Naive thymus-derived CD4-positive, alpha-beta T cell (primary cell): ENCODE measurements at regions of chr4 and their contacts with region 1.

Region 1: GRCh38 chr4:89110986-89111832 is at the start of gene TIGD2:
- DNase-seq: peak; percentile 81 to 90 (median 87)
- ATAC-seq: peak; percentile 97
- H3K4me3 ChIP-seq: peak within 1 kb of the TSS; percentile 80
- H3K4me3 Mint-ChIP-seq: peak within 1 kb of the TSS; percentile 84 to 93 (median 90)
- H3K27ac ChIP-seq: peak within 1 kb of the TSS; percentile 81
- H3K27ac Mint-ChIP-seq: peak within 1 kb of the TSS; percentile 80 to 94 (median 89)
- H3K4me1 ChIP-seq: peaks cover 10 to 15% of the 10 kb centered on the region in 2 donors
- H3K4me1 Mint-ChIP-seq: peaks cover 20 to 28% (median 24%) of the 10 kb centered on the region in 7 donors
- H3K27me3 ChIP-seq: no peaks in the 10 kb centered on the region
- H3K27me3 Mint-ChIP-seq: peaks cover 0 to 25% (median 0%) of the 10 kb centered on the region in 5 donors
- total RNA-seq, gene TIGD2: 3.0 to 7.9 (median 5.2) TPM

Region 2: GRCh38 chr4:87422104-87423052 is 1688.8 kb before region 1 on chr4 and contains the start of gene NUDT9:
- CTCF ChIA-PET with region 1: no interaction called
- POLR2A ChIA-PET with region 1: no interaction called
- intact Hi-C with region 1: loop called in 1 of 2 experiments (anchors 1 kb)
- DNase-seq: peak; percentile 74 to 92 (median 89)
- ATAC-seq: peak; percentile 92
- H3K4me3 ChIP-seq: peak within 1 kb of the TSS; percentile 96
- H3K4me3 Mint-ChIP-seq: peak within 1 kb of the TSS; percentile 94 to 100 (median 98)
- H3K27ac ChIP-seq: peak within 1 kb of the TSS; percentile 85
- H3K27ac Mint-ChIP-seq: peak within 1 kb of the TSS; percentile 97 to 100 (median 99)
- H3K4me1 ChIP-seq: peaks cover 17% of the 10 kb centered on the region in 2 donors
- H3K4me1 Mint-ChIP-seq: peaks cover 14 to 59% (median 48%) of the 10 kb centered on the region in 7 donors
- H3K27me3 ChIP-seq: no peaks in the 10 kb centered on the region
- H3K27me3 Mint-ChIP-seq: no peaks in the 10 kb centered on the region
- total RNA-seq, gene NUDT9: 9.7 to 18.1 (median 10.5) TPM

Region 3: GRCh38 chr4:88244816-88245579 is 866.2 kb before region 1 on chr4:
- CTCF ChIA-PET with region 1: no interaction called
- POLR2A ChIA-PET with region 1: no interaction called
- intact Hi-C with region 1: no loop called
- DNase-seq: peak; percentile 14 to 45 (median 28)
- ATAC-seq: peak; percentile 80
- H3K4me3 ChIP-seq: peak overlapping the region; percentile 46
- H3K4me3 Mint-ChIP-seq: peak overlapping the region; percentile 39 to 86 (median 76)
- H3K27ac ChIP-seq: no peak overlapping the region
- H3K27ac Mint-ChIP-seq: peak overlapping the region in 8 of 9 donors; percentile 17 to 86 (median 55)
- H3K4me1 ChIP-seq: peaks cover 0 to 4% of the 10 kb centered on the region in 2 donors
- H3K4me1 Mint-ChIP-seq: peaks cover 7 to 19% (median 16%) of the 10 kb centered on the region in 7 donors
- H3K27me3 ChIP-seq: no peaks in the 10 kb centered on the region
- H3K27me3 Mint-ChIP-seq: peaks cover 0 to 2% (median 0%) of the 10 kb centered on the region in 5 donors

Region 4: GRCh38 chr4:88456757-88457306 is 654.4 kb before region 1 on chr4 and contains the start of gene HERC5:
- CTCF ChIA-PET with region 1: no interaction called
- POLR2A ChIA-PET with region 1: no interaction called
- intact Hi-C with region 1: loop called (anchors 2 kb)
- DNase-seq: peak; percentile 90 to 94 (median 92)
- ATAC-seq: peak; percentile 98
- H3K4me3 ChIP-seq: peak within 1 kb of the TSS; percentile 100
- H3K4me3 Mint-ChIP-seq: peak within 1 kb of the TSS; percentile 87 to 100 (median 98)
- H3K27ac ChIP-seq: peak within 1 kb of the TSS; percentile 72
- H3K27ac Mint-ChIP-seq: peak within 1 kb of the TSS; percentile 94 to 100 (median 99)
- H3K4me1 ChIP-seq: peaks cover 5 to 6% of the 10 kb centered on the region in 2 donors
- H3K4me1 Mint-ChIP-seq: peaks cover 10 to 52% (median 37%) of the 10 kb centered on the region in 7 donors
- H3K27me3 ChIP-seq: no peaks in the 10 kb centered on the region
- H3K27me3 Mint-ChIP-seq: no peaks in the 10 kb centered on the region
- total RNA-seq, gene HERC5: 11.8 to 52.5 (median 14.1) TPM

Region 5: GRCh38 chr4:88613417-88613875 is 497.8 kb before region 1 on chr4:
- CTCF ChIA-PET with region 1: no interaction called
- POLR2A ChIA-PET with region 1: no interaction called
- intact Hi-C with region 1: loop called in 1 of 2 experiments (anchors 5 kb)
- DNase-seq: peak in 7 of 9 donors; percentile 71 to 91 (median 85)
- ATAC-seq: peak; percentile 94
- H3K4me3 ChIP-seq: peak overlapping the region; percentile 43
- H3K4me3 Mint-ChIP-seq: peak overlapping the region; percentile 64 to 92 (median 84)
- H3K27ac ChIP-seq: peak overlapping the region; percentile 77
- H3K27ac Mint-ChIP-seq: peak overlapping the region; percentile 91 to 99 (median 99)
- H3K4me1 ChIP-seq: peaks cover 28 to 55% of the 10 kb centered on the region in 2 donors
- H3K4me1 Mint-ChIP-seq: peaks cover 50 to 98% (median 86%) of the 10 kb centered on the region in 7 donors
- H3K27me3 ChIP-seq: no peaks in the 10 kb centered on the region
- H3K27me3 Mint-ChIP-seq: no peaks in the 10 kb centered on the region

Region 6: GRCh38 chr4:89024051-89024675 is 87.0 kb before region 1 on chr4:
- CTCF ChIA-PET with region 1: no interaction called
- POLR2A ChIA-PET with region 1: no interaction called
- intact Hi-C with region 1: loop called (anchors 2 kb)
- DNase-seq: peak in 8 of 9 donors; percentile 33 to 80 (median 72)
- ATAC-seq: peak; percentile 99
- H3K4me3 ChIP-seq: no peak overlapping the region
- H3K4me3 Mint-ChIP-seq: no peak overlapping the region
- H3K27ac ChIP-seq: no peak overlapping the region
- H3K27ac Mint-ChIP-seq: no peak overlapping the region
- H3K4me1 ChIP-seq: no peaks in the 10 kb centered on the region
- H3K4me1 Mint-ChIP-seq: peaks cover 0 to 31% (median 6%) of the 10 kb centered on the region in 7 donors
- H3K27me3 ChIP-seq: no peaks in the 10 kb centered on the region
- H3K27me3 Mint-ChIP-seq: peaks cover 0 to 10% (median 0%) of the 10 kb centered on the region in 5 donors

Region 7: GRCh38 chr4:89307446-89308160 is 196.4 kb after region 1 on chr4 and contains the start of gene GPRIN3:
- CTCF ChIA-PET with region 1: no interaction called
- POLR2A ChIA-PET with region 1: no interaction called
- intact Hi-C with region 1: loop called in 1 of 2 experiments (anchors 2 kb)
- DNase-seq: peak; percentile 54 to 80 (median 66)
- ATAC-seq: peak; percentile 79
- H3K4me3 ChIP-seq: peak within 1 kb of the TSS; percentile 93
- H3K4me3 Mint-ChIP-seq: peak within 1 kb of the TSS; percentile 80 to 99 (median 94)
- H3K27ac ChIP-seq: peak within 1 kb of the TSS; percentile 81
- H3K27ac Mint-ChIP-seq: peak within 1 kb of the TSS; percentile 83 to 98 (median 90)
- H3K4me1 ChIP-seq: peaks cover 18 to 20% of the 10 kb centered on the region in 2 donors
- H3K4me1 Mint-ChIP-seq: peaks cover 39 to 70% (median 64%) of the 10 kb centered on the region in 7 donors
- H3K27me3 ChIP-seq: no peaks in the 10 kb centered on the region
- H3K27me3 Mint-ChIP-seq: no peaks in the 10 kb centered on the region
- total RNA-seq, gene GPRIN3: 10.2 to 55.5 (median 24.8) TPM